ENCODE measurements at regions of chrX and their contacts with region 1.

Region 1: GRCh38 chrX:100643956-100644860 is at the start of gene SRPX2:
- DNase-seq: peak; percentile 88
- ATAC-seq: peak; percentile 97
- H3K4me3 ChIP-seq: peak within 1 kb of the TSS; percentile 56
- H3K27ac ChIP-seq: peak within 1 kb of the TSS; percentile 71
- H3K4me1 ChIP-seq: peaks cover 74% of the 10 kb centered on the region
- H3K27me3 ChIP-seq: no peaks in the 10 kb centered on the region
- CTCF ChIP-seq: no peak
- total RNA-seq, gene SRPX2: 12.2 and 19.3 TPM in 2 replicates

Region 2: GRCh38 chrX:101397779-101398178 is 753.6 kb after region 1 on chrX:
- CTCF ChIA-PET with region 1: no interaction called
- POLR2A ChIA-PET with region 1: interaction called, 10 read pairs
- intact Hi-C with region 1: no loop called
- DNase-seq: no peak
- ATAC-seq: peak; percentile 68
- H3K4me3 ChIP-seq: no peak overlapping the region
- H3K27ac ChIP-seq: peak overlapping the region; percentile 36
- H3K4me1 ChIP-seq: peaks cover 8% of the 10 kb centered on the region
- H3K27me3 ChIP-seq: no peaks in the 10 kb centered on the region
- CTCF ChIP-seq: no peak